ENCODE measurements at regions of chr4 and their contacts with region 1.

Region 1: DNA sequence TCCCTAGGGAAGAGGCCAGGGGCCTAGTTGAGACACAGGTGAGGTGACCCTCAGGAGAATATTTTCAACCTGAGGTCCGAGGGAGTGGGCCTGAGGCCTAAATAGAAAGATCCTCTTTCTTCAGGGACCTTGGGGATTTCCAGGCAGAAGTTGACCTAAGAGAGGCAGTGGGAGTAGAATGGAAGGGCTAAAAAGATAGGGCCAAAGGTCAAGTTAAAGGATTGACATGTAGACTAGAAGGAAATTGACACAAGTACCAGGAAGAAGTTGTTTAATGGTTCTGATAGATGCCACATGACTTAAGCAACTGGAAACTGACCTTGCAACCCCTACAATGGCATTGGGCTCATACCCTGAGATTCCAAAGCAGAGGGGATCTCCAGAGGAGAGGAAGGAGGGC is 76.9 kb downstream of the SHROOM3 start:
- DNase-seq: no peak
- H3K4me3 ChIP-seq: no peak overlapping the region
- H3K27ac ChIP-seq: no peak overlapping the region
- H3K4me1 ChIP-seq: no peaks in the 10 kb centered on the region; a peak in 1 of 7 replicates
- H3K27me3 ChIP-seq: no peaks in the 10 kb centered on the region
- CTCF ChIP-seq: no peak
- EP300 ChIP-seq: no peak
- POLR2A ChIP-seq: no peak
- RAD21 ChIP-seq: no peak

Region 2: DNA sequence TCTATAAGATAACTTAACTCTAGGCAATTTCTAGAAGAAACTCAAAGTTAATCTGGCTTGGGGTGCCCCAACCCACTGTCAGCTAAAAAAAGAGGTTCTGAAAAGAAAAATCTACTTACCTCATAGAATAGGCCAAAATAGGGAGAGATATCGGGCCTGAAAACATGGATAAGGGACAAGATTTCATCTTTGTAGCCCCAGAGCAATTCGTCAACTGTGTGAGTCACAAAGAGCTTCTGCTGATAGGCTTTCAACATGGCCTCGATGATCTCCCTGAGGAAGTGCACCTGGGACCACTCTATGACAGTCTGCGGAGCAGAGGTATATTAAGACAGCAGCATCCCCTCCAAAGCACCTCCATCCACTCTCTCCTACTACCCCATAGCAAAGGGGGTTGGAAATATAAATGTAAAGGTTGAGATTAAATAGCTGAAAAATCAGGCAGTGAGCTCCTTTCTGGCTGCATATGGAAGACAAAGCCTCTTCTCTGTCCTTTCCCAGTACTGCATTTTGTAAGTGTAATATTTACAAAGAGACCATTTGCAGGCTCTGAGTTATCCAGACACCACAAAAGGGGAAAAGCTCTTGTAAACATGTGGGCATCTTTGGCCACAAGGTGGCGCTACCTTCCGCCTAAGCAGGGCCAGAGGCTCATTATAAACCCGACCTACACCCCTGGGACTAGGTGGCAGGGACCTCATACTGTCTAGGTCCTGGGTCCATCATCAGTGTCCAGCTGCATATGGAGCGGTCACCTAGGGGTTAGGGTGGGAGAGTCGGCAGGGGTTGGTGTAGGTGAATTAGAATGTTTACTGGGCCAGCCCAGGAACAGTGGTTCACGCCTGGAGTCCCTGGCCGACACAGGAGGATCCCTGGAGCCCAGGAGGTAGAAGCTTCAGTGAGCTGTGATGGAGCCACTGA is 332.3 kb before region 1 on chr4:
- CTCF ChIA-PET with region 1: no interaction called
- POLR2A ChIA-PET with region 1: no interaction called
- DNase-seq: peak; percentile 59 to 93
- H3K4me3 ChIP-seq: no peak overlapping the region
- H3K27ac ChIP-seq: no peak overlapping the region
- H3K4me1 ChIP-seq: no peaks in the 10 kb centered on the region
- H3K27me3 ChIP-seq: no peaks in the 10 kb centered on the region
- CTCF ChIP-seq: peak; percentile 77 to 87 (median 86)
- EP300 ChIP-seq: no peak
- POLR2A ChIP-seq: no peak
- RAD21 ChIP-seq: peak; percentile 95

Region 3: GRCh38 chr4:76341063-76341462 is 170.9 kb before region 1 on chr4:
- CTCF ChIA-PET with region 1: no interaction called
- POLR2A ChIA-PET with region 1: no interaction called
- DNase-seq: no peak
- H3K4me3 ChIP-seq: no peak overlapping the region
- H3K27ac ChIP-seq: no peak overlapping the region
- H3K4me1 ChIP-seq: no peaks in the 10 kb centered on the region
- H3K27me3 ChIP-seq: no peaks in the 10 kb centered on the region
- CTCF ChIP-seq: no peak
- EP300 ChIP-seq: no peak
- POLR2A ChIP-seq: no peak
- RAD21 ChIP-seq: no peak

Region 4: GRCh38 chr4:76624241-76624681 is 112.3 kb after region 1 on chr4:
- CTCF ChIA-PET with region 1: no interaction called
- POLR2A ChIA-PET with region 1: no interaction called
- DNase-seq: no peak
- H3K4me3 ChIP-seq: no peak overlapping the region; a peak in 1 of 8 replicates
- H3K27ac ChIP-seq: no peak overlapping the region
- H3K4me1 ChIP-seq: peaks cover 5 to 25% (median 7%) of the 10 kb centered on the region in 4 experiments; a peak in 5 of 7 replicates
- H3K27me3 ChIP-seq: no peaks in the 10 kb centered on the region
- CTCF ChIP-seq: no peak
- EP300 ChIP-seq: no peak
- POLR2A ChIP-seq: no peak
- RAD21 ChIP-seq: no peak

Region 5: DNA sequence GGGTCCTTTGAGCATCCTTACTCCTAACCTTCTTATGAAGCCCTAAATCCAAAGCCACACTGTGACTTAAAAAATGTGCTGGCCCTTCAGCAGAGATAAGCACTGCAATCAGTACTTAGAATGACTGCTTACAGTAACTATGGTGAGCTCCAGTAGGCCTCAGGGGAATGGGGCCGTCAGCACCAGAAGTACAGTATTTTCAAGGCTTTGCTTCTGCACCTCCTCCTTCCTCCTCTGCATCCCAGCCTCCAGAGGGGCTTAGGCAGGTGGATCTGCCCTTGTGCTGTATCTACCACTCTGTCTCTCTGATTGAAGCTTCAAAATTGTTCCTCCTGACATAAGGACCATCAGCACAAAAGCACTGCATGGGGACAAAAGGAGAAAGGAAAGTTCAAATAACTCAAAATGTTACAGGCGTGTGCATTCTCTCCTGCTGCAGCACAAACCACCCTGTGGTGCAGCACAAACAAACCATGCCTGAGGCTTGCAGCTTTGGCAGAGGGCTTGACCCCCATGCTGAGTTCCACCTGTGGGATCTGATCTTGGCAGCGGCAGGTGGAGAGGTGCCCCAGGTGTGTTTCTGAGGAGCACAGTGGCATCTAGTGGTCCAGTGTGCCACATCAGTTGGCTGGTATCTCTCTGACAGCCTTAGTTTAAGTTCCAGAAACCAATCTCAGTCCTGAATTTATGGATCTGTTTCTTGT is 221.3 kb after region 1 on chr4:
- CTCF ChIA-PET with region 1: interaction called, 13 read pairs
- POLR2A ChIA-PET with region 1: no interaction called
- DNase-seq: peak; percentile 57 to 64
- H3K4me3 ChIP-seq: no peak overlapping the region
- H3K27ac ChIP-seq: no peak overlapping the region
- H3K4me1 ChIP-seq: peaks cover 5 to 24% (median 16%) of the 10 kb centered on the region in 4 experiments
- H3K27me3 ChIP-seq: no peaks in the 10 kb centered on the region
- CTCF ChIP-seq: peak; percentile 65 to 77 (median 70)
- EP300 ChIP-seq: peak in 1 of 2 experiments; percentile 75; a peak in 1 of 3 replicates
- POLR2A ChIP-seq: no peak
- RAD21 ChIP-seq: peak; percentile 90 to 92